ENCODE measurements at regions of chr4 and their contacts with region 1.

Region 1: DNA sequence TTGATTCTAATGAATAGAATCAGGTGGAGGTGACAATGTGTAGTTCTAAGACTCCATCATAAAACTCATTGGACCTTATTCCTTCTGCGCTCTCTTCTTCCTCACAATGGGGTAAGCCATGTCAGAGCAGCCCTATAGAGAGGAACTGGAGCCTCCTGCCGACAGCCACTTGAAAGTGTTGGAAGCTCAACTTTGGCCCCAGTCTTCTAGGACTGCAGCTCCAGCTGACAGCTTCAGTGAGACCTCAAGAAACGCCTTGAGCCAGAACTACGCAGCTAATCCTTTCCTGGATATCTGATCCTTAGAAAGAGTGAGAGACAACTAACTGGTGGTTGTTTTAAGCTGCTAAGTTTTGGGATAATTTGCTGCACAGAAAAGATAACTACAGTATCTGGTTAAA is 22.1 kb upstream of the ADH7 start:
- DNase-seq: no peak
- H3K4me3 ChIP-seq: no peak overlapping the region
- H3K27ac ChIP-seq: no peak overlapping the region
- H3K4me1 ChIP-seq: no peaks in the 10 kb centered on the region
- H3K27me3 ChIP-seq: no peaks in the 10 kb centered on the region
- CTCF ChIP-seq: no peak
- POLR2A ChIP-seq: no peak

Region 2: DNA sequence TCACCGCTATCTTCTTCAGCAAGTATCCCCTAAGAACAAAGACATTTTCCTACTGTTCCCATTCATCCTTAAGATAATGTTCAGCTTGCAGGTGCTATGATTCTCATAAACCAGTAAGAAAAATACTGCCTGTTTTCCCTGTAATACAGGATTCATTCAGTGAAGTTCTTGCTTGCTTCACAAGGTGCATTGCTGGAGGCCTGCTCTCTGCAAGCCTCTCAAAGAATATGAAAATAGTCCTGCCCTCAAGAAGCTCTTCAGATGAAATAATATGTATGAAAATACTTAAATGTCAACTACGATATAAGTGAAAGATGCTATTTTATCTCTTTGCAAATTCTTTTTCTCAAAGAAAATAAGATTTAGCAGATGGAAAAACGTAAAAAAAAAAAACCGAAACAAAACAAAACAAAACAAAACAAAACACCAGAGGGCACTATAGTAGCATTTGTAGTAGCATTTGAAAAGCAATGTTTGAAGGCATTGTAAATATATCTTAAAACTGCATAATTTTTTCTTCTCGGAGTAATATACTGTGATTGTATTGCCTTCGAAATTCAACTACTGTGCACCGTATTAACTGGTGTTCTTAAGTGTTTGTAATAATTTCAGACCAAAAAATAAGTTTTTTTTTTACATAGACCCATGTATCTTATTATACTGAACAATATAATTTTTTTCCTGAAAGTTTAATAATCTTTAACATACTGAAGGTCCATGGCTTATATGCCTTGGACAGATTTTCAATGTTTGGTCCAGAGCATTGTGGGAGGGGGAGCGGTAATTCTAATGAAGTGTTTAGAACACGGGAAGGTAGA is 339.2 kb before region 1 on chr4:
- intact Hi-C with region 1: loop called (anchors 5 kb)
- DNase-seq: no peak
- H3K4me3 ChIP-seq: no peak overlapping the region
- H3K27ac ChIP-seq: no peak overlapping the region
- H3K4me1 ChIP-seq: no peaks in the 10 kb centered on the region
- H3K27me3 ChIP-seq: no peaks in the 10 kb centered on the region
- CTCF ChIP-seq: peak in 2 of 4 experiments; percentile 6 to 34
- POLR2A ChIP-seq: no peak

Region 3: DNA sequence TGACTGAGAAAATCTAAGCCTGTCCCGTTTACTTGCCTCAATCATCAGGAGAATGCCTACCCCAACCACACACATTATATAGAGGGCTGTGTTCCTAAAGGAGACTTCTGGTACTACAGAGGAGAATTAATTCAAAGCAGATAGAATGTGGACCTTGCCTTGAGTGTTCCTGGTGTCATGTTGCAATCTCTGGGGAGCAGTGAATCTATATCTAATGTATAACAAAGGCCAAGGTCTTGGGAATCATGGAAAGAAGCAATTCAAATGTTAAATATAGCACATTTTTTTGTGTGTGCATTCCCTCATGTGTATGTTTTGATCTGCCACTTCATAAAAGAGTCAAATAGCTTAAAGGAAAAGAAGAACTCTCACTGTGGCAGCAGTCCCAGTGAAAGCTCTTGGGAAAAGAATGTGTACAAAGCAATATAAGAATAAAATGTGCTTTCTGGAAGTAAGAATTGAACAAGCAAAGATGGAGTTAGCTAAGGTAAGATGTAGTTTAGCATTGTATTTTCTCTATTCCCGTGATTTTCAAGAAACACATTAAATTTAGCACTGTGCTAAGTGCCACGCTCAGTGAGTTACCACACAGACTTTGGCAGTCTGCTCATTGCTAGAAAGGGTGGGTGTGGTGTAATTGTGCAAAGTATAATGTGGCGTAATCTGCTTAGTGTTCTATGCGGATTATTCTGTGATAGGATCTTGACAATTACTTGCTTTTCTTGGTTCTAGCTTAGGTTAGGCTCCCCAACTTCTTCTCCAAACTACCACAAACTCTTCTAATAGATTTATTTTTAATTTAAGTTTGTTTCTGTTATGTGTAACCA is 251.9 kb before region 1 on chr4:
- intact Hi-C with region 1: loop called (anchors 10 kb)
- DNase-seq: no peak
- H3K4me3 ChIP-seq: no peak overlapping the region
- H3K27ac ChIP-seq: no peak overlapping the region
- H3K4me1 ChIP-seq: no peaks in the 10 kb centered on the region
- H3K27me3 ChIP-seq: no peaks in the 10 kb centered on the region
- CTCF ChIP-seq: no peak
- POLR2A ChIP-seq: no peak